ENCODE measurements at regions of chr5 and their contacts with region 1.

Region 1: DNA sequence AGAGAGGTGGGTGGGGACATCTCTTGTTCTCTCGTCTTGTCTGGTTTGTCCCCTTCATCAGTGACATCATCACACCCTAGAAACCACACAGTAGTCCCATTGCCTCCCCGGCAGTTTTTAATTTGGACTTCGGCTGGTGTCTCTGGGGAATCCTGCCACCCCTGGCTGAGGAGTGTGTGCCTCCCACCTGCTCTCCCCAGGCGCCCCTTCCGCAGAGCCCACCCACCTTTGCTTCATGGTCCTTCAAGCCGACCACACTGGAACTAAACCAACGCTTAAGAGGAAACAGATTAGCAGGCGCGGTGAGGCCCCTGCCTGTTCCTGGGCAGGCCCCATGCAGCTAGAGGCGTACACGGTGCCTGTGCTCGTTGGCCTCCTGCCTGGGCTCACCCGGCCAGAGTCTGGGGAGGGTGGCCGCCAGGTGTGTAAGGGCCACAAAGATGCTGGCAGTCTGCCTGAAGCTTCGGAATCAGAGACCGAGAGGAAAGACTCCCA is 107.6 kb upstream of the SPRY4 start:
- DNase-seq: peak; percentile 76
- H3K4me3 Mint-ChIP-seq: peak overlapping the region; percentile 67
- H3K27ac Mint-ChIP-seq: peak overlapping the region; percentile 89
- H3K4me1 Mint-ChIP-seq: peaks cover 36% of the 10 kb centered on the region
- H3K27me3 Mint-ChIP-seq: no peaks in the 10 kb centered on the region

Region 2: DNA sequence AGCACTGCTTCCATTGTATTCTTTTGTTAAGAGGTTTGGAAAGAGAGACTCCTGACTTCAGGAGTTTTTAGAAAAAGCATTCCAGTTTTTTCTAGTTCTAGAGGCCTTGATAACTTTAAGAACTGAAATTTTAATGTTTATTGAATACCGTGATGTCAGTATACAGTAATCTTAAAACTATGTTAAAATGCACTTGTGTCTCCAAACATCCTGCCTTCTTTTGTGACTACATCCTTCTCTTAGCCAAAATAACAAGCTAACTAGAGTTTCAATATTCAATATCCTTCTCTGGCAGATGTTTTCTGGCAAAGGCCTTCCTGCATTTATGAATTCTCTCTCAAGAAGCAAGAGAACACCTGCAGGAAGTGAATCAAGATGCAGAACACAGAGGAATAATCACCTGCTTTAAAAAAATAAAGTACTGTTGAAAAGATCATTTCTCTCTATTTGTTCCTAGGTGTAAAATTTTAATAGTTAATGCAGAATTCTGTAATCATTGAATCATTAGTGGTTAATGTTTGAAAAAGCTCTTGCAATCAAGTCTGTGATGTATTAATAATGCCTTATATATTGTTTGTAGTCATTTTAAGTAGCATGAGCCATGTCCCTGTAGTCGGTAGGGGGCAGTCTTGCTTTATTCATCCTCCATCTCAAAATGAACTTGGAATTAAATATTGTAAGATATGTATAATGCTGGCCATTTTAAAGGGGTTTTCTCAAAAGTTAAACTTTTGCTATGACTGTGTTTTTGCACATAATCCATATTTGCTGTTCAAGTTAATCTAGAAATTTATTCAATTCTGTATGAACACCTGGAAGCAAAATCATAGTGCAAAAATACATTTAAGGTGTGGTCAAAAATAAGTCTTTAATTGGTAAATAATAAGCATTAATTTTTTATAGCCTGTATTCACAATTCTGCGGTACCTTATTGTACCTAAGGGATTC is 280.7 kb before region 1 on chr5:
- intact Hi-C with region 1: loop called (anchors 10 kb)
- DNase-seq: peak; percentile 87
- H3K4me3 Mint-ChIP-seq: no peak overlapping the region
- H3K27ac Mint-ChIP-seq: no peak overlapping the region
- H3K4me1 Mint-ChIP-seq: peaks cover 6% of the 10 kb centered on the region
- H3K27me3 Mint-ChIP-seq: no peaks in the 10 kb centered on the region

Region 3: GRCh38 chr5:142356716-142357473 is 75.5 kb before region 1 on chr5:
- intact Hi-C with region 1: loop called (anchors 2 kb)
- DNase-seq: peak; percentile 97
- H3K4me3 Mint-ChIP-seq: peak overlapping the region; percentile 79
- H3K27ac Mint-ChIP-seq: peak overlapping the region; percentile 94
- H3K4me1 Mint-ChIP-seq: peaks cover 40% of the 10 kb centered on the region
- H3K27me3 Mint-ChIP-seq: peaks cover 3% of the 10 kb centered on the region

Region 4: DNA sequence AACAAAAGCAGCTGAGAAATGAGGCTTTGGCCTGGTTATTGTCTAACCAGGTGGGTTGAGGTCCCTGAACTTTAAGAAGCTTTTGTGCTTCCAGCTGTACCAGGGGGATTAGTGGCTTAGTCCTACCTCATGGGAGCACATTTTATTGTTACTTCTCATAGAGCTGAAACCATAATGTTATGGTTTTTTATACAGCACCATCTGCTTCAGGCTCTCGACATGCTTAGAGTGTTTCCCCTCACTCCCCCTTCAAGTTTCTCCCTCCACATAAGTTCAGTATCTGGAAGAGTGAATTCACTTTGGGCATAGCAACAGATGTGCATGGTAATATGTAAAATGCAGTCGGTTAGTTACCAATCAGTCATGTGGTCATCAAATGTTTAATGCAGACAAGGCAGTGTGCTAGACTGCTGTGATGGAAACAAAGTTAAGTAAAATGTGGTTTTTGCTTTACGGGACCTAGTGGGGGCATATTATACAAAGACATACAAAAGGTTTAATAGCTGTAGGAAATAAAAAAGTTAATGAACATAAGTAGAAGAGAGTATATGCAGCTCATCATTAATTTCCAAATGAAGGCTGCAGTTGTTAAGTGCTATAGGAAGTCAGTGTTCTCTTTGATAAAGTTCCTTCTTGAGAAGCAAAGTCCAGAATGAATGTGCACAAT is 11.7 kb before region 1 on chr5:
- intact Hi-C with region 1: loop called (anchors 2 kb)
- DNase-seq: no peak
- H3K4me3 Mint-ChIP-seq: peak overlapping the region; percentile 20
- H3K27ac Mint-ChIP-seq: no peak overlapping the region
- H3K4me1 Mint-ChIP-seq: peaks cover 31% of the 10 kb centered on the region
- H3K27me3 Mint-ChIP-seq: peaks cover 3% of the 10 kb centered on the region

Region 5: GRCh38 chr5:142507531-142508372 is 75.3 kb after region 1 on chr5:
- intact Hi-C with region 1: loop called (anchors 5 kb)
- DNase-seq: no peak
- H3K4me3 Mint-ChIP-seq: peak overlapping the region; percentile 17
- H3K27ac Mint-ChIP-seq: peak overlapping the region; percentile 75
- H3K4me1 Mint-ChIP-seq: peaks cover 34% of the 10 kb centered on the region
- H3K27me3 Mint-ChIP-seq: no peaks in the 10 kb centered on the region

Measured in activated CD4-positive, alpha-beta T cell treated with anti-CD3 and anti-CD28 coated beads, Interleukin-2, amount 10 ng/mL, durations not matched to agents 24 days and 14 days (primary cell).